AG04450 (cell line): ENCODE measurements at regions of chr12 and their contacts with region 1.

Region 1: DNA sequence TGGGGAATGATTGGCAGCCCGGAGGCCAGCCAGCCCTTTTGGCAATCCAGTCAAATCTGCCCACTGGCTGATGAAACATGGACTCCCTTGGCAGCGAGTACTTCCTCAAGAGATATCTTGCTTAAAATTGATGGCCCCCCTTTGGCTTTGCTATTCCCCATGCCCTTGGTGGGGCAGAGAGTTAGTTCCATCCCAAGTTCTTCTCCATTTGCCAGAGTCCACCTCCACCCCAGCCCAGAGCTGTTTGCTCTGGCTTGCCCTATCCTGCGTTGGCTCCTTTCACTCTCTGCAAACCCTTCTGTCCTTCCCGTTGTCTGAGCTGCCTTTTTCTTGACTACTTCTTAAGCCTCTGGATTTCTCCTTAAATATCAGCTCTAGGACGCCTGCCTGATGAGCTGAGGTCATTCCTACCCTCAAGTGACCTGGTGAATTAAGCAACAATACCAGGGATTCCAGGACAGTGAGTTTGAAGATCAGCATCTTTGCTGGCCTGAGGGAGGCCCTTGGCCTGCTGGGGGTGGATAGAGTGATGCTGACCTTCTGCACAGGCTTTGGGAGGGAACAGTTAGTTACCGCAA is 212.0 kb downstream of the CACNA1C start:
- DNase-seq: peak; percentile 92
- H3K4me3 ChIP-seq: no peak overlapping the region
- H3K27ac ChIP-seq: peak overlapping the region; percentile 92
- H3K27me3 ChIP-seq: no peaks in the 10 kb centered on the region
- CTCF ChIP-seq: no peak

Region 2: DNA sequence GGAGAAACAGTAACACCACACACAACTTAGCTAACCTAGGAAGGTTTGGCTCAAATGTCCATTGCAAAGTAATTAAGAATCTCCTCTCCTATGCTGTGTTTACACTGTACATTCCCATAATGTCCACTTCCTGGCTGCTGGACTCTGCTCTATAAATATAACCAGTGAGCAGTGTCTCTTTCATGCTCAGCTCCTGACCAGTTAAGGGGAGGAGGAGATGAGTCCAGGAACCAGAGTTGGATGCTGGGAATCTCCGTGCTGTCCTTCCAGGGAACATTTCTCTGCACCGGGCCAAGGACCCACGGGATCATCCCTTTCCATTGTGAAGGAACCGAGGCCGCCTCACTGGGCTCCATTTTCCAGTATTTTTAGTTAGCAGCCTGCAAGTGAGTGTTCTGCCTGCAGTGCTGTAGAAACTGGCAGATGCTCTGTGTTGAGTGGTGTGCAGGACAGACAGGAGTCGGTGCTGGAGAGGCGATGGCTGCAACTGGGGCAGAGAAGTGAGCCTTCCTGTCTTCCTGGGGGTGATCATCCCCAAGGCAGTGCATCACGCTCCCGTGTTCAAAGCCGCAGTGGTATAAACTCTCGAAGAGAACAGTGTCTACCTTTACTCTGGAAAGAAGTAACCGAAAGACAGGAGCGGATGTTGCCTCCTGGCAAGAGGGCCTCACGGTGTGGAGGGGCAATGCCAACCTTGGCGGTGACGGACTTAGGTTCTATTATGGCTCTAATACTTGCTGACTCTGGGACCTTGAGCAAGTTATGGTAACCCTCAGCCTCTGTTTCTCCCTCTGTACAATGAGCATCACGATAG is 16.4 kb before region 1 on chr12:
- CTCF ChIA-PET with region 1: no interaction called
- POLR2A ChIA-PET with region 1: interaction called, 12 read pairs
- DNase-seq: peak; percentile 71
- H3K4me3 ChIP-seq: no peak overlapping the region; the same call in 1 of the 2 replicates
- H3K27ac ChIP-seq: peak overlapping the region; percentile 86
- H3K27me3 ChIP-seq: no peaks in the 10 kb centered on the region
- CTCF ChIP-seq: no peak

Region 3: GRCh38 chr12:2429032-2429431 is 164.3 kb after region 1 on chr12:
- CTCF ChIA-PET with region 1: no interaction called
- POLR2A ChIA-PET with region 1: no interaction called
- DNase-seq: no peak
- H3K4me3 ChIP-seq: no peak overlapping the region
- H3K27ac ChIP-seq: no peak overlapping the region
- H3K27me3 ChIP-seq: peaks cover 3% of the 10 kb centered on the region
- CTCF ChIP-seq: no peak